AG04449 (cell line): ENCODE measurements at regions of chr4 and their contacts with region 1.

Region 1: GRCh38 chr4:80365928-80366327 is 30.4 kb downstream of the CFAP299 start:
- DNase-seq: peak; percentile 33
- H3K4me3 ChIP-seq: no peak overlapping the region
- CTCF ChIP-seq: peak; percentile 72

Region 2: DNA sequence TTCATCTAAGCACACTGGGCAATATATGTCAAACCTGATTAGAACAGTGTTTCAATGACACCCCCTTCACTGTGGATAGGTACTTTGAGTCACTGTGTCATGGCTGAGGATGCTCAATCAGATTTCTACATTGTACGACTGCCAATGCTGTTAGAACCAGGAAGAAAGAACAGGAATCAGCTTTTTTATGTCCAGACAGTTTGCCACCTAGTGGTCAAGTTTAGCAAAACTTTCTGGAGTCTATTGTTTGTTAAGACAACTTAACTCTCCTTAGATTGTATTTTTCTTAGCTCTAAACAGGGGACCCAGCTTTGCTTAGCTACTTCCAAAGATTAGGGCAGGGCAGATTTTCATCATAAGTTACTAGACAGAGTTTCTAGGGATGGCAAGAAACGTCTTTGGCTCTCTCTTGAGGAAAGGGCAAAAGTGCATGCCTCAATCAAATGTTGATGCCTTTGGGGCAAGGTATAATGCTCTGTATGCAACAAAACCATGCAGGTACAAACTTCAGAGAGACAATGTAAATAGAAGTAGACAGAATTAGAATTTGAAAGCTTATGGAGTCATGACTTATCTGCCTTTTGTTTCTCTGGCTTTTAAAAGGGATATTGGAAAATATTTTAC is 624.1 kb after region 1 on chr4:
- CTCF ChIA-PET with region 1: interaction called, 134 read pairs
- POLR2A ChIA-PET with region 1: no interaction called
- DNase-seq: peak; percentile 19
- H3K4me3 ChIP-seq: no peak overlapping the region
- CTCF ChIP-seq: peak; percentile 37

Region 3: GRCh38 chr4:81052119-81053068 is 686.5 kb after region 1 on chr4:
- CTCF ChIA-PET with region 1: interaction called, 34 read pairs
- POLR2A ChIA-PET with region 1: no interaction called
- DNase-seq: peak; percentile 9
- H3K4me3 ChIP-seq: no peak overlapping the region
- CTCF ChIP-seq: peak; percentile 70